ENCODE measurements at regions of chr3 and their contacts with region 1.

Region 1: DNA sequence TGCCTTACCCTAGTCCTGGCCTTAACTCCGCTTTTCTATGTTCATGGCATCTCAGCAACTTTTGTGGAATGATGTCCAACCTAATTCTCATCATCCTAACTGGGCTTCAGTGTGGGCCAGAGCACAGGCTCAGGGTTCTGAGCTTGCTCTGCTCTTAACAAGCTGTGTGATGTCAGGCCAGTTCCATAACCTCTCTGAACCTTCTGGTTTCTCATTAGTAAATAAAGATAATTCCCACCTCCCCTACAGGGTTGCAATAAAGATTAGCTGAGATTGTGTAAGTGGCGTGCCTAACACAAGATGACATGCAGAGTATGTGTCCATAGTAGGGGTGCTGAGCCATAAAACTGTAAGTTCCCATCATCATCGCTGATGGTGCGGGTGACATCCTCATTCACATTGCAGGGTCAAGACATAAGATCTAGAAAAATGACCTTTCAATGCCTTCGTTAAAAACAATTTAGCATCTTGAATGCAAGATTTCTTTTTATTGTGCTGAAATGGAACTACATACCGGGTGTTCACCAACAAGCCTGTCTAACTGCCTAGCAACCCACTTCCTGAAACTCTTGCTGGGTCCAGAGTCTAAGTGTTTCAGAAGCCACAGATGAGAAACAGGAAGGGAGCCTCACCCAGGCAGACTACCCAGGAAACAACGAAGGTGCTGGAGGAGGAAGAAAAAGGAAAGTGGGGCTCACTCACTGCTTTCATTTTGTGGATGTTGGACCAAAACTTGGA is 36.2 kb downstream of the CDCP1 start:
- DNase-seq: no peak
- H3K4me3 ChIP-seq: no peak overlapping the region
- H3K27ac ChIP-seq: no peak overlapping the region
- H3K4me1 ChIP-seq: peaks cover 0 to 18% (median 14%) of the 10 kb centered on the region in 4 donors
- H3K27me3 ChIP-seq: no peaks in the 10 kb centered on the region
- CTCF ChIP-seq: no peak
- EP300 ChIP-seq: no peak
- POLR2A ChIP-seq: no peak

Region 2: DNA sequence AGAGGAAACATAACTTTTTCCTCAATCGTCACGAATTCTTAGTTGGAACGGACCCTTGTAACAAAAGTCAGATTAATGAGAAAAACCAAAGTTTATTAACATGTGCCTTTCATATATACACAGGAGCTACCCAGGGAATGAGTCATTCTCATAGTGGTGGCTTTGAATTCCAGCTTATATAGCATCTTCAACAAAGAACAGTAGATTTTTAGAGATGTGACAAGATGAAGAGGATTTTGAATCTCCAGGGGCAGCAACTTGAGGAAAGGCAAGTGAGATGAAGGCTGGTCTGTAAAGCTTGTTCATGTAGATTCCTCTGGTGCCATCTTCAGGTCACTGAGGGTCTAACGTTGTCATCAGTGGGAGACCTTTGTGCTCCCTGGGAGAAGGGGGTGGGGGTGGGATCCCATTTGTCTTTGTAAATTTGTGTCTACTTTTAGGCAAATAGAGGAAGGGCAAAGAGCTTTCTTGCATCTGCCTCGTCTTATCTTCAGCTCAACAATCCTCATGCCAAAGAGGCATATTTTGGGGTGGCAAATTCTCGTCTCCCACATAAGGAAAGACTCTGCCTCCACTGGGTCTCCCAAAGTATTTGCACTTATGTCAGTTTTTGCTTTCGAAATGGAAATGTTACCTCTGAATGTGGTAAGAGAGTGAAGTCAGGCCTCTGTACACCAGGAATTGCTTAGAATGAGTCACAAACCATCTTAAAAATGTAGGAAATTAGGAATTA is 54.4 kb before region 1 on chr3:
- intact Hi-C with region 1: loop called (anchors 2 kb)
- DNase-seq: no peak
- H3K4me3 ChIP-seq: no peak overlapping the region
- H3K27ac ChIP-seq: peak overlapping the region in 3 of 4 donors; percentile 71 to 79 (median 73)
- H3K4me1 ChIP-seq: peaks cover 0 to 44% (median 35%) of the 10 kb centered on the region in 4 donors
- H3K27me3 ChIP-seq: no peaks in the 10 kb centered on the region
- CTCF ChIP-seq: no peak
- EP300 ChIP-seq: no peak
- POLR2A ChIP-seq: no peak

Region 3: DNA sequence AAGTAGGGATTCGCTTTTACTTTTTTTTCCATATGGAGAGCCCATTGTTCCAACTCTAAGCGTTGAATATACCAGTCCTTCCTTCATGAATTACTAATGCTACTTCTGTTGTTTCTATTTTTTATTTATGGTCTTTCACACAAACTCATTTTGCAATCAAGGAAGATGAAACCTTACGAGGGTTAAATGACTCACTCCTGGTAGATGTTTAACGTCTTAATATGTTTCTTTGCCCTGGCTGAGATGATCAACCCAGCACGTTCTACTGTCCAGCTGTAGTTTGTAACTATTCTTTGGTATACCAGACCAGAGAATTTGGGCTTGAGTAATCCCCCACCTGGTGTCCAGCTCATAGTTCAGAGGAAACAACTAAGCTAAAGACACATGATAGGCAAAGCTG is 13.1 kb after region 1 on chr3:
- intact Hi-C with region 1: no loop called
- DNase-seq: no peak
- H3K4me3 ChIP-seq: no peak overlapping the region
- H3K27ac ChIP-seq: peak overlapping the region; percentile 63 to 77 (median 72)
- H3K4me1 ChIP-seq: peaks cover 0 to 37% (median 28%) of the 10 kb centered on the region in 4 donors
- H3K27me3 ChIP-seq: no peaks in the 10 kb centered on the region
- CTCF ChIP-seq: no peak
- EP300 ChIP-seq: no peak
- POLR2A ChIP-seq: no peak